ENCODE measurements at regions of chr4 and their contacts with region 1.

Region 1: GRCh38 chr4:118981839-118982381 is 93.3 kb downstream of the SYNPO2 start:
- DNase-seq: no peak
- H3K4me3 ChIP-seq: no peak overlapping the region
- H3K27ac ChIP-seq: peak overlapping the region in 2 of 8 donors; percentile 10 to 17
- H3K4me1 ChIP-seq: peaks cover 0 to 19% (median 6%) of the 10 kb centered on the region in 6 donors
- H3K27me3 ChIP-seq: no peaks in the 10 kb centered on the region
- CTCF ChIP-seq: peak; percentile 25 to 69 (median 58)
- POLR2A ChIP-seq: no peak

Region 2: GRCh38 chr4:119286377-119287002 is 304.6 kb after region 1 on chr4:
- intact Hi-C with region 1: loop called (anchors 10 kb)
- DNase-seq: no peak
- H3K4me3 ChIP-seq: no peak overlapping the region
- H3K27ac ChIP-seq: no peak overlapping the region
- H3K4me1 ChIP-seq: peaks cover 0 to 32% (median 20%) of the 10 kb centered on the region in 6 donors
- H3K27me3 ChIP-seq: no peaks in the 10 kb centered on the region
- CTCF ChIP-seq: peak in 10 of 11 experiments; percentile 18 to 67 (median 49)
- POLR2A ChIP-seq: no peak